H1 (cell line): ENCODE measurements at regions of chr17 and their contacts with region 1.

Region 1: DNA sequence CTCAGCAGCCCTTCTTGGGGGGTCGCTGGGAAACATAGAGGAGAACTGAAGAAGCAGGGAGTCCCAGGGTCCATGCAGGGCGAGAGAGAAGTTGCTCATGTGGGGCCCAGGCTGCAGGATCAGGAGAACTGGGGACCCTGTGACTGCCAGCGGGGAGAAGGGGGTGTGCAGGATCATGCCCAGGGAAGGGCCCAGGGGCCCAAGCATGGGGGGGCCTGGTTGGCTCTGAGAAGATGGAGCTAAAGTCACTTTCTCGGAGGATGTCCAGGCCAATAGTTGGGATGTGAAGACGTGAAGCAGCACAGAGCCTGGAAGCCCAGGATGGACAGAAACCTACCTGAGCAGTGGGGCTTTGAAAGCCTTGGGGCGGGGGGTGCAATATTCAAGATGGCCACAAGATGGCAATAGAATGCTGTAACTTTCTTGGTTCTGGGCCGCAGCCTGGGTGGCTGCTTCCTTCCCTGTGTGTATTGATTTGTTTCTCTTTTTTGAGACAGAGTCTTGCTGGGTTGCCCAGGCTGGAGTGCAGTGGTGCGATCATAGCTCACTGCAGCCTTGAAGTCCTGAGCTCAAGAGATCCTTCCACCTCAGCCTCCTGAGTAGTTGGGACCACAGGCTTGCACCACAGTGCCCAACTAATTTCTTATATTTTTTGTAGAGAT is 3.4 kb downstream of the STH start:
- DNase-seq: peak; percentile 36 to 91
- H3K4me3 ChIP-seq: no peak overlapping the region
- H3K27ac ChIP-seq: no peak overlapping the region
- H3K4me1 ChIP-seq: no peaks in the 10 kb centered on the region; a peak in 1 of 7 replicates
- H3K27me3 ChIP-seq: no peaks in the 10 kb centered on the region
- CTCF ChIP-seq: peak; percentile 69 to 91 (median 90)
- EP300 ChIP-seq: no peak
- POLR2A ChIP-seq: no peak
- RAD21 ChIP-seq: peak; percentile 92

Region 2: DNA sequence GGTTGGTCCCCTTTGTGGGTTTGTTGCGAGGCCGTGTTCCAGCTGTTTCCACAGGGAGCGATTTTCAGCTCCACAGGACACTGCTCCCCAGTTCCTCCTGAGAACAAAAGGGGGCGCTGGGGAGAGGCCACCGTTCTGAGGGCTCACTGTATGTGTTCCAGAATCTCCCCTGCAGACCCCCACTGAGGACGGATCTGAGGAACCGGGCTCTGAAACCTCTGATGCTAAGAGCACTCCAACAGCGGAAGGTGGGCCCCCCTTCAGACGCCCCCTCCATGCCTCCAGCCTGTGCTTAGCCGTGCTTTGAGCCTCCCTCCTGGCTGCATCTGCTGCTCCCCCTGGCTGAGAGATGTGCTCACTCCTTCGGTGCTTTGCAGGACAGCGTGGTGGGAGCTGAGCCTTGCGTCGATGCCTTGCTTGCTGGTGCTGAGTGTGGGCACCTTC is 30.7 kb before region 1 on chr17:
- CTCF ChIA-PET with region 1: interaction called, 13 read pairs
- POLR2A ChIA-PET with region 1: no interaction called
- DNase-seq: peak in 1 of 2 experiments; percentile 77
- H3K4me3 ChIP-seq: peak overlapping the region in 1 of 4 experiments; percentile 37; a peak in 1 of 8 replicates
- H3K27ac ChIP-seq: no peak overlapping the region
- H3K4me1 ChIP-seq: peaks cover 0 to 3% (median 0%) of the 10 kb centered on the region in 4 experiments; a peak in 1 of 7 replicates
- H3K27me3 ChIP-seq: peaks cover 0 to 5% (median 0%) of the 10 kb centered on the region in 4 experiments; a peak in 3 of 7 replicates
- CTCF ChIP-seq: peak; percentile 62 to 70 (median 66)
- EP300 ChIP-seq: no peak
- POLR2A ChIP-seq: no peak
- RAD21 ChIP-seq: peak; percentile 12 to 52

Region 3: DNA sequence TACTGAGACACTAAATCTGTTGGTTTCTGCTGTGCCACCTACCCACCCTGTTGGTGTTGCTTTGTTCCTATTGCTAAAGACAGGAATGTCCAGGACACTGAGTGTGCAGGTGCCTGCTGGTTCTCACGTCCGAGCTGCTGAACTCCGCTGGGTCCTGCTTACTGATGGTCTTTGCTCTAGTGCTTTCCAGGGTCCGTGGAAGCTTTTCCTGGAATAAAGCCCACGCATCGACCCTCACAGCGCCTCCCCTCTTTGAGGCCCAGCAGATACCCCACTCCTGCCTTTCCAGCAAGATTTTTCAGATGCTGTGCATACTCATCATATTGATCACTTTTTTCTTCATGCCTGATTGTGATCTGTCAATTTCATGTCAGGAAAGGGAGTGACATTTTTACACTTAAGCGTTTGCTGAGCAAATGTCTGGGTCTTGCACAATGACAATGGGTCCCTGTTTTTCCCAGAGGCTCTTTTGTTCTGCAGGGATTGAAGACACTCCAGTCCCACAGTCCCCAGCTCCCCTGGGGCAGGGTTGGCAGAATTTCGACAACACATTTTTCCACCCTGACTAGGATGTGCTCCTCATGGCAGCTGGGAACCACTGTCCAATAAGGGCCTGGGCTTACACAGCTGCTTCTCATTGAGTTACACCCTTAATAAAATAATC is 11.2 kb after region 1 on chr17:
- CTCF ChIA-PET with region 1: interaction called, 31 read pairs
- POLR2A ChIA-PET with region 1: no interaction called
- DNase-seq: no peak
- H3K4me3 ChIP-seq: no peak overlapping the region
- H3K27ac ChIP-seq: no peak overlapping the region
- H3K4me1 ChIP-seq: no peaks in the 10 kb centered on the region; a peak in 1 of 7 replicates
- H3K27me3 ChIP-seq: no peaks in the 10 kb centered on the region
- CTCF ChIP-seq: no peak
- EP300 ChIP-seq: no peak
- POLR2A ChIP-seq: no peak
- RAD21 ChIP-seq: no peak

Region 4: GRCh38 chr17:46035112-46035818 is 32.8 kb after region 1 on chr17:
- CTCF ChIA-PET with region 1: interaction called, 15 read pairs
- POLR2A ChIA-PET with region 1: no interaction called
- DNase-seq: no peak
- H3K4me3 ChIP-seq: no peak overlapping the region
- H3K27ac ChIP-seq: no peak overlapping the region
- H3K4me1 ChIP-seq: no peaks in the 10 kb centered on the region
- H3K27me3 ChIP-seq: no peaks in the 10 kb centered on the region
- CTCF ChIP-seq: no peak
- EP300 ChIP-seq: no peak
- POLR2A ChIP-seq: peak in 1 of 2 experiments; percentile 28; a peak in 1 of 3 replicates
- RAD21 ChIP-seq: no peak

Region 5: GRCh38 chr17:46212634-46213435 is 210.4 kb after region 1 on chr17:
- CTCF ChIA-PET with region 1: interaction called, 21 read pairs
- POLR2A ChIA-PET with region 1: no interaction called
- DNase-seq: no peak
- H3K4me3 ChIP-seq: no peak overlapping the region
- H3K27ac ChIP-seq: no peak overlapping the region
- H3K4me1 ChIP-seq: no peaks in the 10 kb centered on the region
- H3K27me3 ChIP-seq: no peaks in the 10 kb centered on the region
- CTCF ChIP-seq: peak in 2 of 3 experiments; percentile 88 to 89; a peak in 3 of 4 replicates
- EP300 ChIP-seq: no peak
- POLR2A ChIP-seq: no peak
- RAD21 ChIP-seq: peak; percentile 75 to 79